HepG2 (cell line): ENCODE measurements at regions of chr7 and their contacts with region 1.

Region 1: GRCh38 chr7:115224922-115225321 is 303.0 kb downstream of the MDFIC start:
- DNase-seq: no peak
- ATAC-seq: no peak
- H3K4me3 ChIP-seq: no peak overlapping the region
- H3K27ac ChIP-seq: no peak overlapping the region
- H3K4me1 ChIP-seq: no peaks in the 10 kb centered on the region
- H3K27me3 ChIP-seq: no peaks in the 10 kb centered on the region
- CTCF ChIP-seq: no peak
- EP300 ChIP-seq: no peak
- POLR2A ChIP-seq: no peak
- RAD21 ChIP-seq: no peak

Region 2: DNA sequence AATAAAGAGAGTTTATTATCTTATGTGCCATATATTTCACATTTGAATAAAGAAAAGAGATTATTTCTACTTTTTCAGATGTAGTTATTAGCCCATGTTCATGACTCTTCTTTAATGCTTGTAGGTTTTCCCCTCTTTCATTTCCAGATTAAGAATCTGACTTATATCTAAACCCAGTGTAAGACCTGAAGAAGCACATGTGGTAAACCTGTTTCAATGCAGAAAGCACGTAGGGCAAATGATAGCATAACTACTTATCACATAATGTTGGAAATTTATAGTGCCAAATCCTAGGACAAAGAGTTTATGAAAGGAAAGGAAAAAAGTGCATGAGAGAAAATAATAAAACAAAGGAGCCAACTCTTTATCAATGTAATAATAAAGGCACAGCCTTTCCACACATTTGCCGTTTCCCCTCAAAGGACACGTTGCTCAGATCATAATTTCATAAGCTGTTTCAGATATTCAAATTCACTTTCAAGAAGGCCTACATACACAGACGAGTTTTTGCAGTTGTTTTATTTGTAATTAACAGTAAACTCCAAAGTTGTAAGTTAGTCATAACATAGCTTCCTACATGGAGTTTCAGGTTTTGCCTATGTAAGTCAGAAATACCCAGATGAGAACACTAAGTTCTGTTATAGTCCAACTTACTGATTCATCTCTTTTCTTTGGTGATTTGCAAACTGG is 391.9 kb before region 1 on chr7:
- CTCF ChIA-PET with region 1: no interaction called
- POLR2A ChIA-PET with region 1: no interaction called
- in situ Hi-C with region 1: no loop called
- intact Hi-C with region 1: no loop called
- DNase-seq: no peak
- ATAC-seq: no peak
- H3K4me3 ChIP-seq: no peak overlapping the region
- H3K27ac ChIP-seq: no peak overlapping the region
- H3K4me1 ChIP-seq: no peaks in the 10 kb centered on the region
- H3K27me3 ChIP-seq: no peaks in the 10 kb centered on the region
- CTCF ChIP-seq: no peak
- EP300 ChIP-seq: no peak
- POLR2A ChIP-seq: no peak
- RAD21 ChIP-seq: no peak

Region 3: DNA sequence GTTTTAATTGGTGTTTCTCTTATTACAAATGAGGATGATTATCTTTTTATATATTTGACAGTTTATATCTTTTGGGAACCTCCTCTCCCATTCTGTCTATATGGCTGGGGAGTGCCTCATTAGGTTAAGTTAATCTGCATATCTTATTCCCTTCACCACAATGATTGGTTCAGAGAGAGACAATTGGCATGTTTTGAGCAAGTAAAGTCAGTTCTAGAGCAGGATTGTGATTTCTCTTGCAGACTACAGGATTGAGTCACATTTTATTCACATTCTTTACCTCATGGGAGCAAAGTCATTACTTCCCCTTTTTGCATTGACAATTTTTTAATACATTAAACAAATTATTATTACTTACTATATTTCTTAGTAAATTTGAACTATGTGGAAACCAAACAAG is 42.6 kb after region 1 on chr7:
- CTCF ChIA-PET with region 1: no interaction called
- POLR2A ChIA-PET with region 1: no interaction called
- in situ Hi-C with region 1: no loop called
- intact Hi-C with region 1: loop called (anchors 1 kb)
- DNase-seq: no peak
- ATAC-seq: no peak
- H3K4me3 ChIP-seq: no peak overlapping the region
- H3K27ac ChIP-seq: no peak overlapping the region
- H3K4me1 ChIP-seq: no peaks in the 10 kb centered on the region
- H3K27me3 ChIP-seq: no peaks in the 10 kb centered on the region
- CTCF ChIP-seq: no peak
- EP300 ChIP-seq: no peak
- POLR2A ChIP-seq: no peak
- RAD21 ChIP-seq: no peak

Region 4: GRCh38 chr7:115971506-115971905 is 746.6 kb after region 1 on chr7:
- CTCF ChIA-PET with region 1: no interaction called
- POLR2A ChIA-PET with region 1: no interaction called
- in situ Hi-C with region 1: no loop called
- intact Hi-C with region 1: no loop called
- DNase-seq: no peak
- ATAC-seq: no peak
- H3K4me3 ChIP-seq: no peak overlapping the region
- H3K27ac ChIP-seq: no peak overlapping the region
- H3K4me1 ChIP-seq: peaks cover 6% of the 10 kb centered on the region; the same call in 1 of the 2 replicates
- H3K27me3 ChIP-seq: no peaks in the 10 kb centered on the region; a peak in 1 of 5 replicates
- CTCF ChIP-seq: no peak
- EP300 ChIP-seq: no peak
- POLR2A ChIP-seq: no peak
- RAD21 ChIP-seq: no peak